ENCODE measurements at regions of chr13 and their contacts with region 1.

Region 1: GRCh38 chr13:40102856-40103255 is 447.4 kb downstream of the COG6 start:
- DNase-seq: peak; percentile 98
- ATAC-seq: peak; percentile 86
- H3K4me3 Mint-ChIP-seq: peak overlapping the region; percentile 62
- H3K27ac Mint-ChIP-seq: peak overlapping the region; percentile 99
- H3K4me1 Mint-ChIP-seq: peaks cover 53% of the 10 kb centered on the region
- H3K27me3 Mint-ChIP-seq: no peaks in the 10 kb centered on the region

Region 2: DNA sequence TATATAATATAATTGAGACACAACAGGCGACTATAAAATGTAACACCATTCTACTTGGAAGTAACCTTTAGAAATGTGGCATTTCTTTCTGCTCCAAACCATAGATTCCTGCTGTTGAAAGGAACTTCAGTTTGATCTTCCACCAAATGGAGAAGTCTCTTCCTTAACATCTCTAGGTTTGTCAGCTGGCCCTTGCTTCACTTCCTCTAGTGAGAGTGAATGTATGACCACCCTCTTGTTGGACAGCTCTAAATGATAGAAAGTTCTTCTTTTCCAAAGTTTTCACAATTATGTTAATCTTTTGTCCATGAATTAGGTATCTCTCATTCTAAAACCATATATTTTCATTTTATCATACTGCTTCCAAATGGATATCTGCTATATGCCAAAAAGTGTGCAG is 461.2 kb before region 1 on chr13:
- CTCF ChIA-PET with region 1: no interaction called
- POLR2A ChIA-PET with region 1: no interaction called
- intact Hi-C with region 1: no loop called
- DNase-seq: no peak
- ATAC-seq: no peak
- H3K4me3 Mint-ChIP-seq: no peak overlapping the region
- H3K27ac Mint-ChIP-seq: no peak overlapping the region
- H3K4me1 Mint-ChIP-seq: no peaks in the 10 kb centered on the region
- H3K27me3 Mint-ChIP-seq: peaks cover 16% of the 10 kb centered on the region

Region 3: GRCh38 chr13:40026174-40026585 is 76.7 kb before region 1 on chr13:
- CTCF ChIA-PET with region 1: interaction called, 5 read pairs
- POLR2A ChIA-PET with region 1: interaction called, 10 read pairs
- intact Hi-C with region 1: loop called (anchors 1 kb)
- DNase-seq: peak; percentile 79
- ATAC-seq: peak; percentile 82
- H3K4me3 Mint-ChIP-seq: peak overlapping the region; percentile 25
- H3K27ac Mint-ChIP-seq: peak overlapping the region; percentile 28
- H3K4me1 Mint-ChIP-seq: peaks cover 48% of the 10 kb centered on the region
- H3K27me3 Mint-ChIP-seq: no peaks in the 10 kb centered on the region

Region 4: GRCh38 chr13:40149611-40150274 is 46.9 kb after region 1 on chr13:
- CTCF ChIA-PET with region 1: interaction called, 6 read pairs
- POLR2A ChIA-PET with region 1: interaction called, 4 read pairs
- intact Hi-C with region 1: loop called (anchors 1 to 2 kb)
- DNase-seq: peak; percentile 33
- ATAC-seq: peak; percentile 9
- H3K4me3 Mint-ChIP-seq: no peak overlapping the region
- H3K27ac Mint-ChIP-seq: peak overlapping the region; percentile 66
- H3K4me1 Mint-ChIP-seq: peaks cover 72% of the 10 kb centered on the region
- H3K27me3 Mint-ChIP-seq: no peaks in the 10 kb centered on the region

Region 5: GRCh38 chr13:40206241-40207000 is 103.6 kb after region 1 on chr13:
- CTCF ChIA-PET with region 1: interaction called, 3 read pairs
- POLR2A ChIA-PET with region 1: interaction called, 4 read pairs
- intact Hi-C with region 1: loop called (anchors 1 kb)
- DNase-seq: peak; percentile 68
- ATAC-seq: peak; percentile 89
- H3K4me3 Mint-ChIP-seq: peak overlapping the region; percentile 58
- H3K27ac Mint-ChIP-seq: peak overlapping the region; percentile 99
- H3K4me1 Mint-ChIP-seq: peaks cover 64% of the 10 kb centered on the region
- H3K27me3 Mint-ChIP-seq: no peaks in the 10 kb centered on the region

Region 6: GRCh38 chr13:40388617-40389016 is 285.8 kb after region 1 on chr13:
- CTCF ChIA-PET with region 1: no interaction called
- POLR2A ChIA-PET with region 1: no interaction called
- intact Hi-C with region 1: loop called (anchors 2 to 5 kb)
- DNase-seq: peak; percentile 89
- ATAC-seq: peak; percentile 98
- H3K4me3 Mint-ChIP-seq: peak overlapping the region; percentile 71
- H3K27ac Mint-ChIP-seq: peak overlapping the region; percentile 95
- H3K4me1 Mint-ChIP-seq: peaks cover 44% of the 10 kb centered on the region
- H3K27me3 Mint-ChIP-seq: no peaks in the 10 kb centered on the region

Region 7: DNA sequence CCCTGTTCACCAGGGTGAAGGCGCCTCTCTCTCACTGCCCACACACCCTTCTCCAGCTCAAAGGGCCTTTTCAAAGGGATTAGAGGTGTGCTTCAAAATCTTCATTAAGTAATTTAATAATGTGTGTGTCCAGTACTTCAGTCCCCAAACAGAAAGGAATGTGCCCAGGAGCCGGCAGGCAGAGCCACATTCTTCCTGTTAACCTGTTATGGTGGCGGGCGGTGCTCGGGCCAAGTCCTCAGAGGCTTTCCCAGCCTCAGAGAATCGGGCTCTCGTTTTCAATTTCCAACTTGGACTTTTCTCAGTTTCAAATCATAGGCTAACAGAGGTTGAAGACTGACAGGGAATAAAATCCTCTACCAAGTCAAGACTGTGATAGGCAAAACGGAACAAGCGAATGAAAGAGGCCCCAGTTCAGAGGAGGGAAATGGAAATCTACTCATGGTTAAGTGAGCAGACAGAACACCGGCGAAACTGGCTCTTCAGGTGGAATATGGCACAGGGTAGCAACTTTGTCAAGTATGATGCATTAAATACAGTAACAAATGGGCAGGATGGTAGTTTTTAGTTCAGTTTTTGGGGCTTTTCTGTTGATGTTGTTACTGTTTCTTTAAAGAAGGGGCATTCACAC is 495.0 kb after region 1 on chr13:
- CTCF ChIA-PET with region 1: no interaction called
- POLR2A ChIA-PET with region 1: no interaction called
- intact Hi-C with region 1: loop called in 1 of 2 experiments (anchors 2 kb)
- DNase-seq: no peak
- ATAC-seq: no peak
- H3K4me3 Mint-ChIP-seq: peak overlapping the region; percentile 57
- H3K27ac Mint-ChIP-seq: peak overlapping the region; percentile 89
- H3K4me1 Mint-ChIP-seq: peaks cover 92% of the 10 kb centered on the region
- H3K27me3 Mint-ChIP-seq: no peaks in the 10 kb centered on the region

Region 8: DNA sequence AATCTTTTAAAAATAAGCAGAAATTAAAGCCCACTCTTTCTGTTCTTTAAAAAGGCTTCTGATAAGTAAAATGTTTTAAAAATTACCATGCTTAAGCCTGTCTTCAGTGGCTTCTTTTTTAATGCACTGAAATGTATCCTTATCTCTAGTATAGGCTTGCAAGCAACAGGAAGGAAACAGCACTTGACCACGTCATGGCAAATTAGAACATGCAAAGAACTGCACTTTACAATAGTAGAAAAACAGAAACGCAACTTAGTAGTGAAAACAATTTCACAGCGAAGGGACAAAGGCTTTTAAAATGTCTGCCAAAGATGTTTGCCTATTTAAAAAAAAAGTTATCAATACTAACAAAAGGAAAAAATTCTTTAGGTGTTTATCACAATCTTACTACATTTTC is 879.9 kb after region 1 on chr13:
- CTCF ChIA-PET with region 1: no interaction called
- POLR2A ChIA-PET with region 1: no interaction called
- intact Hi-C with region 1: loop called in 1 of 2 experiments (anchors 10 kb)
- DNase-seq: peak; percentile 70
- ATAC-seq: peak; percentile 62
- H3K4me3 Mint-ChIP-seq: peak overlapping the region; percentile 91
- H3K27ac Mint-ChIP-seq: peak overlapping the region; percentile 92
- H3K4me1 Mint-ChIP-seq: peaks cover 66% of the 10 kb centered on the region
- H3K27me3 Mint-ChIP-seq: no peaks in the 10 kb centered on the region

Measured in activated CD4-positive, alpha-beta T cell treated with anti-CD3 and anti-CD28 coated beads for 36 hours (primary cell).